ENCODE measurements at regions of chr3 and their contacts with region 1.

Region 1: GRCh38 chr3:65439641-65440284 is 599.0 kb downstream of the MAGI1 start:
- DNase-seq: peak; percentile 47 to 84 (median 58)
- H3K4me3 ChIP-seq: no peak overlapping the region
- H3K27ac ChIP-seq: no peak overlapping the region
- H3K4me1 ChIP-seq: no peaks in the 10 kb centered on the region
- H3K27me3 ChIP-seq: no peaks in the 10 kb centered on the region
- CTCF ChIP-seq: peak; percentile 26 to 75 (median 52)
- POLR2A ChIP-seq: no peak

Region 2: GRCh38 chr3:65226287-65226686 is 213.5 kb before region 1 on chr3:
- intact Hi-C with region 1: no loop called
- DNase-seq: no peak
- H3K4me3 ChIP-seq: no peak overlapping the region
- H3K27ac ChIP-seq: no peak overlapping the region
- H3K4me1 ChIP-seq: no peaks in the 10 kb centered on the region
- H3K27me3 ChIP-seq: no peaks in the 10 kb centered on the region
- CTCF ChIP-seq: no peak
- POLR2A ChIP-seq: no peak

Region 3: GRCh38 chr3:65483480-65483879 is 43.7 kb after region 1 on chr3:
- intact Hi-C with region 1: no loop called
- DNase-seq: peak; percentile 22 to 70 (median 30)
- H3K4me3 ChIP-seq: no peak overlapping the region
- H3K27ac ChIP-seq: no peak overlapping the region
- H3K4me1 ChIP-seq: peaks cover 0 to 27% of the 10 kb centered on the region in 2 donors
- H3K27me3 ChIP-seq: no peaks in the 10 kb centered on the region
- CTCF ChIP-seq: no peak
- POLR2A ChIP-seq: no peak

Region 4: DNA sequence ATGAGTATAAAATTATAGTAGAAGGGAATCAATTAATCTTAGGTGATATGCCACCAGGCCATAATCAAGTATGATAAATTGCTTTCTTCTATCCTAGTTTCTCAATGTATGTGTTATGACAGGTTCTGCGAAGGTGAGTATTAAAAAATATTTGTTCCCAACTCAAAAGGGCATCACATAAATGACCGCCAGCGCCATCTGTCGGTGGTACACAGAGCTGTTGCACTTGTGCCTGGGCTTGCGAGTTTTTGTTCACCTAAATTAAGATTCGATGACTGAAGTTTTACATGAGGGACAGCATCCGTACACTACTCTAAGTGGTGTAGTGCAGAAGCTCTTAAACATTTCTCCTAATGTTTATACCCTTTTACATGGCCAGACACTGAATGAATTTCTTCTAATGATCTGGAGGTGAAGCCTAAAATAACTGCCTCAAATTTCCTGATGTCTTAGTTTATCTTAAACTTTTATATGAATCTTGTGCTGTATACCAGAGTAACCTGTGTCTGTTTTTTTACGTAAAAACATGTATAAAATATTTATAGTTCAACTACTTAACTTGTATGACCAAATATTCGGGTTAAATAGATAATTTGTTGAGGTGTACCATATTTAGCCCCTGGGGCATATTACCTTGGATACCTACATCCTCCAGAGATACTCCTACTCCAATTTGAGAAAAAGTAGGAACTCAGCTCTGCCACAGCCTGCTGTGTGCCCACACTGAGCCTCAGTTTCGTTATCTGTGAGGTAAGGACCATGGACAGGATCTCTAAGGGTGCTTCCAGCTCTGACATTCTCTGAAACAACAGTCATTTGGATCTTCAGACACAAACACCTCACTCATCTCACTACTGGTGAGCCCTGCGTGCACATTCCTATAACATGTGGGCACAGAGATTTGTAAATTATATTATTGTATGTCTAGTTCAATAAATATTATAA is 233.4 kb after region 1 on chr3:
- intact Hi-C with region 1: loop called in 1 of 2 experiments (anchors 10 kb)
- DNase-seq: peak; percentile 43 to 86 (median 69)
- H3K4me3 ChIP-seq: no peak overlapping the region
- H3K27ac ChIP-seq: no peak overlapping the region
- H3K4me1 ChIP-seq: no peaks in the 10 kb centered on the region
- H3K27me3 ChIP-seq: no peaks in the 10 kb centered on the region
- CTCF ChIP-seq: peak; percentile 48 to 83 (median 69)
- POLR2A ChIP-seq: no peak

Region 5: DNA sequence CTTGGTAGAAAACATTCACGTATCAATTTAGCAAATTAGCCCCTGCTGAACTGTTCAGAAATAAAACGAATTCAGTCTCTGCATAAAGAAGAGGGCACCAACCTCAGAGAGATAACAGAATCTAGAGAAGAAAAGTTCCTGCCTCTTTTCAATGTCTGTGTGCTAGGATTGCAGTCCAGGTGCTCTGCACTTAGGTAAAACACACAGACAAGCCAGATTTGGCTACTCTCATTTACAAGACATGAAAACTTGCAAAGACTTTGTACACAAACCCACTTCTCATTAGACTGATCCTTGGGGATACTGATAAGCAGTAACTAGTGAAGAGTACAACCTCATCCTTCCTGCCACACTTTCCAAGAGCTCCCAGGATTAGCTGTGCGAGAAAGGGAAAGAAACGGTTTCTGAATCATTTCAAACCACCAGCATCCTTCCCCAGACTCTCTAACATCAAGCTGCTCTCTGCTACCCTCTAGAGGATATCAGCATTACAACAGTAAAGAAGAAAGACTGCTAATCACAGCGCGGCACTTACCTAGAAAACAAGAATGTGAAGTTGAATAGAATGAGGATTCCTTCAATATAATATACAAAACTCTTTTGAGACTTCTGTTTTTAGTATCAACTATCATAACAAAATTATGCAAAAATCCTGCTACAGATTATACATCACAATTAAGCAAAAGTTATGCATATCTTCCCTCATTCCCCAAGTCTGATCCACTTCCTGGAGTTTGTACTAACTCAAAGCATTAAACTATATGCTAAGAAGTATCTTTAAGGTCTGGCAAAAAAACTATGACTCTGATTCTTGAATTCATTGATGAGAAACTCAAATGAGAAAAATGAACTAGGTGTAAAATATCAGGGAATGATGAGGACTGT is 292.5 kb after region 1 on chr3:
- intact Hi-C with region 1: loop called in 1 of 2 experiments (anchors 10 kb)
- DNase-seq: peak in 4 of 7 donors; percentile 15 to 30 (median 25)
- H3K4me3 ChIP-seq: no peak overlapping the region
- H3K27ac ChIP-seq: no peak overlapping the region
- H3K4me1 ChIP-seq: peaks cover 6 to 19% of the 10 kb centered on the region in 2 donors
- H3K27me3 ChIP-seq: no peaks in the 10 kb centered on the region
- CTCF ChIP-seq: peak; percentile 60 to 79 (median 72)
- POLR2A ChIP-seq: no peak

Region 6: DNA sequence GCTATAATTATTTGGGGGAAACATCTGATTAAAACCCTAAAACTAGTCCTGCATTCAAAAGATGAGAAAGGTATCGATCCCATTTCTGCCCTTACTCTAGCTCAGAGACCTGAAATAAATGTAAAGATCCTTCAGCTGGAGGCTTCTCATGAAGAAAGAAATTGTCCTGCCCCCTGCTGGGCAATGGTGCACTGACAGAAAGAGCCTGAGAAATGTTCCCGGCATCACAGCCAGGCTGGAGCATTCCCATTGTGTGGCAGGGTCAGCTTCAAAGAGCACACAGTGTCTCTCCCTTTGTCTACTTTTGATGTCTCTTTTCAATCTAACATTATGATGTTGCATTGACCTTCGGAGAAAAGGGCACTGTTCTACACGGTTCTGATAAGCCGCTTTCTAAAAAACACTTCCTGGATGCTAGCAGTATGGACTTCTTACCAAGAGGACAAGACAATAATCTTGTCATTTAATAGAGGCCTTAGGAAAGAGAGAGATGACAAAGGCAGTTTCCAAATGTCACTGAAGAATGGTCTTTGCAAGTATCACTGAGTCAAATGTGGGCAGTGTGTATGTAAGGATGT is 311.4 kb after region 1 on chr3:
- intact Hi-C with region 1: no loop called
- DNase-seq: peak; percentile 22 to 68 (median 51)
- H3K4me3 ChIP-seq: no peak overlapping the region
- H3K27ac ChIP-seq: no peak overlapping the region
- H3K4me1 ChIP-seq: no peaks in the 10 kb centered on the region
- H3K27me3 ChIP-seq: no peaks in the 10 kb centered on the region
- CTCF ChIP-seq: peak; percentile 45 to 69 (median 54)
- POLR2A ChIP-seq: no peak

Region 7: DNA sequence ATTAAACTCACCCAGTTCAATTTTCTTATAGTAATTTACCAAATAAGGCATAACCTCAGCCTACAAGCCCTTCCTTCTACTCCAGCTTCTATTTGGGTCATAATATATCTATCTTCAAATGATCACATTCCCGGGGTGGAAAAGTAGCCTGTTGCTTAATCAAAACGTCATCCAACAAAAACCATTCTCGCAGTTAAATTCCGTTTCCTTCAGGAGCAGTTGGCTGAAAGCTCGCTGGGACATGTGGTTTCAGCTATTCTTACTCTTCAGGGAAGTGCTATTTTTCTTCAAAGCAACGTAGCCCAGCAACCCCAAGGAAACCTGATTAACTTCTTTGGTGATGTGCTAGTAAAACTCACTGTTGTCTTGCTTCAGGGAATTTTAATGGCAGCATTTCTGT is 539.4 kb after region 1 on chr3:
- intact Hi-C with region 1: no loop called
- DNase-seq: peak in 2 of 7 donors; percentile 17 to 20
- H3K4me3 ChIP-seq: no peak overlapping the region
- H3K27ac ChIP-seq: peak overlapping the region in 2 of 5 donors; percentile 58 to 70
- H3K4me1 ChIP-seq: peaks cover 0 to 10% of the 10 kb centered on the region in 2 donors
- H3K27me3 ChIP-seq: no peaks in the 10 kb centered on the region
- CTCF ChIP-seq: no peak
- POLR2A ChIP-seq: no peak

Measured in adrenal gland (tissue), 19 donors.